RWPE1 (cell line): ENCODE measurements at regions of chr19 and their contacts with region 1.

Region 1: GRCh38 chr19:45368127-45368526 is 2.2 kb downstream of the ERCC2 start:
- DNase-seq: no peak
- H3K27ac ChIP-seq: peak overlapping the region; percentile 88
- CTCF ChIP-seq: no peak

Region 2: DNA sequence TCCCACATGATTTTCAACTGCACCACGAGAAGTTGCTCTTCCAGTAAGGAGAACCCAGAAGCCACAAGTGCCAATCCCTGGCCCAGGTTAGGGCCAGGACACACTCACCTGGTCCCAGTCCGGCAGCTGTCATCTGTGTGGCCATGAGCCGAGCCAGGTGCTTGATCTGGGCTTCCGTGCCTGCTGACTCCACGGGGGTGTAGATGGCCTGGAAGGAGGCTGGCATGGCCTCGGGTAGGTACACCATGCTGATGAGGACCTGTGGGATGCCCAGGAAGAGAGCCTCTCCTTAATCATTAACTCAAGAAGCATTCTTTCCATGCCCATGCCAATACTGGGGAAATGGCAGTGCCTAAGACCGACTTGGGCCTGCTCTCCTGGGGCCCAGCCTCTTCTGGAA is 466.8 kb after region 1 on chr19:
- CTCF ChIA-PET with region 1: no interaction called
- POLR2A ChIA-PET with region 1: interaction called, 12 read pairs
- DNase-seq: no peak
- H3K27ac ChIP-seq: peak overlapping the region; percentile 13; the same call in 1 of the 2 replicates
- CTCF ChIP-seq: no peak